HEK293 (cell line): ENCODE measurements at regions of chr9 and their contacts with region 1.

Region 1: DNA sequence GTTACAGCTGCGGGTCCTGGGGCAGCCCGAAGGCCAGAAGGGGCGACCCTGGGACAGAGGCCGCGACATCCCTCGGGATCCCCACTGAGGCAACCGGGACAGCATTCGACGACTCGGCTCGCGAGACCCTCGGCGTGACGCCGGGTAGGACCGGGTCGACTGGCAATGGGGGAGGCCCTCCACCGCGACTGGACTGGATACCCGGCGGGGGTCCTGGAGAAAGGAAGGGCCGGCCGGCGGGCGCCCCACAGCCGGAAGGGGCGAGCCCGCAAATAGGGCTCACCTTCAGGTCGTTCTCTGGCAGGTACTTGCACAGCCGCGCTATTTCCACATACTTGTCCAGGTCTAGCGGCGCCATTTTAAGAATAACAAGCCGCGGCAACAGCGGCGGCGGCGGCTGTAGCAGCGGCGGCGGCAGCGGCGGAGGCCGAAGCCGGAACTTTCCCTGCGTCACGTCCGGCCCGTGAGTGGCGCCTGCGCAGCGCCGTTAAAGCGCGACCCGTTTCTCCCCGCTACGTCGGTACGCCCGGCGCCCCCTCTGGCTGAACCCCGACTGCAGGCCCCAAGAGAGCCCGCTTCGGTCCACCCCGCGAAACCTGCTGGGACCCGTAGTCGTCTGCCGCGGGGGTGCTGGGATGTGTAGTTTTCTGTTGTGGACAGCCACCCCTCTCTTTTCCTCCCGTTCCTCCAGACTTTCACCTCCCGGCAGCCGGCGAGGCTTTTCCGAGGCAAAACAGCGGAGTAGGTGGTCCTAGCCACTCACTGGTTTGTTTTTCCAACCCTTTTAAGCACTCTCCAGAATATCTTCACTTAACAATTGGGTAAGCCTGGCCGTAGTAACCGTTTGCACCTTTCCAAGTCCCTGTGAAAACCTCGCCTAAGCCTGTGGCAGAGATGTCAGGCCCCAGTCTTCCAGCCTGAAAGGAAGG is at the start of gene PPP6C:
- H3K4me3 ChIP-seq: peak within 1 kb of the TSS; percentile 98
- H3K27ac ChIP-seq: peak within 1 kb of the TSS; percentile 70
- H3K4me1 ChIP-seq: no peaks in the 10 kb centered on the region; the same call in 1 of the 2 replicates
- CTCF ChIP-seq: peak; percentile 92

Region 2: DNA sequence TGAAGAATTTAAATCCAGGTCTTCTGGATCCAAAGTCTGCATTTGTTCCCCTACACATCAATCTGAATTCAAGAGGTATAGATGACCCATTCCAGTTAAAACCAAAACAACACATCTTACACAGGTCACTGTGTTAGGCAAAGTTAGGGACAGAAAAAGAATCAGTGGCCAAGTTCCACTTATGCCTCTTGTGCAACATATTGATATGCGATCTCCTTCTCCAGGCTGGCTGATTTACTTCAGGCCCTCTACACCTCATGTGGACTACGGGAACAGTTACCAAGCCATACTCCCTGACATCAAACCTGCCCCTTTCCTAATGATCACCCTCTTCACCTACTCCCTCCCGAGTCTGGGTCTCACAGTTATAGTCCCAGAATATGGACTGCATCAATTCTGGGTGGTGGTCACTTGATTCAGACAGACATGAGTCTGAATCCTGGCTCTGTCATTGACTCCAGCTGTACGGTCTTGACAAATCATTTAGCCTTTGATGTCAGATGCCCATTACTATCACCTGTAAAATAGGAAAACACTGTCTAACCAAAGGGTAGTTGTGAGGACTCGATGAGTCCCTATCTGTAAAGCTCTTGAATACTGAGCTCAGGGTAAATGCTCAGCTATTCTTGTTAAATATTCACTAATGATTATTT is 274.7 kb before region 1 on chr9:
- CTCF ChIA-PET with region 1: no interaction called
- POLR2A ChIA-PET with region 1: no interaction called
- H3K4me3 ChIP-seq: no peak overlapping the region
- H3K27ac ChIP-seq: no peak overlapping the region
- H3K4me1 ChIP-seq: no peaks in the 10 kb centered on the region
- CTCF ChIP-seq: no peak

Region 3: GRCh38 chr9:125200210-125201047 is 10.8 kb after region 1 on chr9 and contains the start of gene RABEPK:
- CTCF ChIA-PET with region 1: interaction called, 7 read pairs
- POLR2A ChIA-PET with region 1: interaction called, 18 read pairs
- H3K4me3 ChIP-seq: peak within 1 kb of the TSS; percentile 86
- H3K27ac ChIP-seq: peak within 1 kb of the TSS; percentile 44; the same call in 1 of the 2 replicates
- H3K4me1 ChIP-seq: 0 out of 2 replicates have a peak, but pooled peaks cover 3% of the 10 kb centered on the region
- CTCF ChIP-seq: no peak

Region 4: GRCh38 chr9:125460840-125461635 is 271.4 kb after region 1 on chr9:
- CTCF ChIA-PET with region 1: no interaction called
- POLR2A ChIA-PET with region 1: no interaction called
- H3K4me3 ChIP-seq: no peak overlapping the region
- H3K27ac ChIP-seq: no peak overlapping the region
- H3K4me1 ChIP-seq: 0 out of 2 replicates have a peak, but pooled peaks cover 3% of the 10 kb centered on the region
- CTCF ChIP-seq: no peak